WTC11 (cell line): ENCODE measurements at regions of chr9 and their contacts with region 1.

Region 1: GRCh38 chr9:124852829-124853531 is at the start of gene WDR38:
- DNase-seq: peak; percentile 80
- ATAC-seq: peak; percentile 60
- H3K4me3 Mint-ChIP-seq: peak within 1 kb of the TSS; percentile 62
- H3K27ac Mint-ChIP-seq: no peak within 1 kb of the TSS; the same call in 1 of the 2 replicates
- H3K4me1 Mint-ChIP-seq: peaks cover 9% of the 10 kb centered on the region
- H3K27me3 Mint-ChIP-seq: no peaks in the 10 kb centered on the region
- CTCF ChIP-seq: peak; percentile 97
- total RNA-seq, gene WDR38: not detected in 3 replicates

Region 2: GRCh38 chr9:124537926-124538325 is 315.1 kb before region 1 on chr9:
- CTCF ChIA-PET with region 1: interaction called, 17 read pairs
- POLR2A ChIA-PET with region 1: no interaction called
- DNase-seq: no peak
- ATAC-seq: no peak
- H3K4me3 Mint-ChIP-seq: no peak overlapping the region
- H3K27ac Mint-ChIP-seq: no peak overlapping the region
- H3K4me1 Mint-ChIP-seq: no peaks in the 10 kb centered on the region
- H3K27me3 Mint-ChIP-seq: no peaks in the 10 kb centered on the region
- CTCF ChIP-seq: no peak

Region 3: GRCh38 chr9:124743686-124744348 is 109.2 kb before region 1 on chr9:
- CTCF ChIA-PET with region 1: interaction called, 12 read pairs
- POLR2A ChIA-PET with region 1: interaction called, 3 read pairs
- DNase-seq: no peak
- ATAC-seq: no peak
- H3K4me3 Mint-ChIP-seq: no peak overlapping the region
- H3K27ac Mint-ChIP-seq: no peak overlapping the region
- H3K4me1 Mint-ChIP-seq: peaks cover 46% of the 10 kb centered on the region
- H3K27me3 Mint-ChIP-seq: no peaks in the 10 kb centered on the region
- CTCF ChIP-seq: no peak

Region 4: DNA sequence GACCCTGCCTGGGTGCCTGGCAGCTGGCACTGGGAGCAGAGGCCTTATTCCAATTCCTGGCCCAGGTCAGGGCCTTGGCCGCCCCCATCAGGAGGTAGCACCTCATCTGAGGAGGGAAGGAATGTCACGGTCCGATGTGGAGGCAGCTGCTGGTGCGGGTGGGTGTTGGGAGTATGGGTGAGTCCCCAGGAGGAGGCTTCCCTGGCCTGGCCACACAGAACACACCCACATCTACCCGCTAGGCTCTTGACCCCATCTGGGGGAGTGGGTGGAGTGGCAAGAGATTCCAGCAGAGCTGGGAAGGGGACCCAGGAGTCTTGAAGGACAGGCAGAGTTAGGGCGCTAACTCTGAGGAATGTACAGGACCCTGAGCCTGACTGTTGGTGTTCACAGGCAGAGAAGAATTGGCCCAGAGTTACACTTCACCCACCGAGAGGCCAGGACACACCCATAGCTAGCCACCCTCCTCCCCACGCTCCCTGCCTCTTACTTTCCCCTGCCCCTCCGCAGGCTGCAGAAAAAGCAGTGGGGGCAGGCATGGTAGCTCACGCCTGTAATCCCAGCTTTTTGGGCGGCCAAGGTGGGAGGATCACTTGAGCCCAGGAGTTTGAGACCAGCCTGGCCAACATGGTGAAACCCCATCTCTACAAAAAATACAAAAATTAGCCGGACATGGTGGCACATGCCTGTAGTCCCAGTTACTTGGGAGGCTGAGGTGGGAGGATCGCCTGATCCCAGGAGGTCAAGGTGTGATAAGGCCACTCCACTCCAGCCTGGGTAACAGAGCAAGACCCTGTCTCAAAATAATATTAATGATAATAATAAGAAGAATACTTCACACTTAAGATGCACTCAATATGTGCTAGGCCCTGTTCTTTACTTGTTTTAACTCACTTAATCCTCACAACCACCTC is 70.1 kb before region 1 on chr9:
- CTCF ChIA-PET with region 1: interaction called, 935 read pairs
- POLR2A ChIA-PET with region 1: interaction called, 4 read pairs
- DNase-seq: peak; percentile 14
- ATAC-seq: peak; percentile 8
- H3K4me3 Mint-ChIP-seq: no peak overlapping the region
- H3K27ac Mint-ChIP-seq: no peak overlapping the region
- H3K4me1 Mint-ChIP-seq: peaks cover 18% of the 10 kb centered on the region
- H3K27me3 Mint-ChIP-seq: peaks cover 7% of the 10 kb centered on the region
- CTCF ChIP-seq: no peak

Region 5: GRCh38 chr9:124812401-124813016 is 40.5 kb before region 1 on chr9:
- CTCF ChIA-PET with region 1: interaction called, 58 read pairs
- POLR2A ChIA-PET with region 1: no interaction called
- DNase-seq: no peak
- ATAC-seq: no peak
- H3K4me3 Mint-ChIP-seq: no peak overlapping the region
- H3K27ac Mint-ChIP-seq: no peak overlapping the region
- H3K4me1 Mint-ChIP-seq: peaks cover 36% of the 10 kb centered on the region
- H3K27me3 Mint-ChIP-seq: no peaks in the 10 kb centered on the region
- CTCF ChIP-seq: no peak

Region 6: DNA sequence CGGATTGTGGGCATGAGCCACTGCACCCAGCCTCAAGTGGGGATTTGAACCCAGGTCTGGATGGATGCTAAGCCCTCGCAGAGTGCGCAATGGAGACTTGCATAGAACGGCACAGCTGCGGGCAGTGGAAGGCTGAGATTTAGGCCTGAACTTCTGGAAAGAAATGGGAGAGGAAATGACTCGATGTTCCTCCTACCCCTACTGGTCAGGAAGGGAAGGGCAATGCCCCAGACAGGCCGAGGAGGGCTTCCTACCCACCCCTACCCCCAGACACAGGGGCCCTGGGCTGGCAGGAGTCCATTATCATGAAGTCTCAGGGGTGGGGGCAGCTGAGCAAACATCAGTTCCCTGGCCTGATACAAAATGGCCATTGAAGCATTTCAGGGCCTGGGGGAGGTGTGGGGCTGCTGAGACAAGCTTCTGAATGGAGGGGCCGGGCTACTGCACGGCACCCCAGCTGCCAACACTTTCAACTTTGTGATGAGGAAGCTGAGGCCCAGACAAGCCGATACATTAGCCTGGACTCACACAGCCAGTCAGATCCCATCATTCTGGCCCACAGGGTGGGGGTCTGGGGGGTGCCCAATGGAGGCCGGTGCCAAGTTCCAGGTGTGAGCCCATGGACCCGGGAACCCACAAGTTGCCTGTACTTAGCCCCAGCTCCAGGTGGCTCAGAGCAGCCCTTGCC is 13.2 kb before region 1 on chr9:
- CTCF ChIA-PET with region 1: interaction called, 283 read pairs
- POLR2A ChIA-PET with region 1: interaction called, 3 read pairs
- DNase-seq: peak; percentile 74
- ATAC-seq: peak; percentile 90
- H3K4me3 Mint-ChIP-seq: no peak overlapping the region
- H3K27ac Mint-ChIP-seq: peak overlapping the region; percentile 51
- H3K4me1 Mint-ChIP-seq: peaks cover 3% of the 10 kb centered on the region; the same call in 1 of the 2 replicates
- H3K27me3 Mint-ChIP-seq: no peaks in the 10 kb centered on the region
- CTCF ChIP-seq: peak; percentile 70